PC-3 (cell line): ENCODE measurements at regions of chr1 and their contacts with region 1.

Region 1: GRCh38 chr1:204128964-204129896 is 22.6 kb downstream of the ETNK2 start:
- DNase-seq: peak; percentile 77
- ATAC-seq: peak; percentile 44
- H3K4me3 ChIP-seq: peak overlapping the region; percentile 46
- H3K27ac ChIP-seq: peak overlapping the region; percentile 55
- H3K4me1 ChIP-seq: peaks cover 57% of the 10 kb centered on the region
- H3K27me3 ChIP-seq: no peaks in the 10 kb centered on the region
- CTCF ChIP-seq: peak; percentile 88

Region 2: DNA sequence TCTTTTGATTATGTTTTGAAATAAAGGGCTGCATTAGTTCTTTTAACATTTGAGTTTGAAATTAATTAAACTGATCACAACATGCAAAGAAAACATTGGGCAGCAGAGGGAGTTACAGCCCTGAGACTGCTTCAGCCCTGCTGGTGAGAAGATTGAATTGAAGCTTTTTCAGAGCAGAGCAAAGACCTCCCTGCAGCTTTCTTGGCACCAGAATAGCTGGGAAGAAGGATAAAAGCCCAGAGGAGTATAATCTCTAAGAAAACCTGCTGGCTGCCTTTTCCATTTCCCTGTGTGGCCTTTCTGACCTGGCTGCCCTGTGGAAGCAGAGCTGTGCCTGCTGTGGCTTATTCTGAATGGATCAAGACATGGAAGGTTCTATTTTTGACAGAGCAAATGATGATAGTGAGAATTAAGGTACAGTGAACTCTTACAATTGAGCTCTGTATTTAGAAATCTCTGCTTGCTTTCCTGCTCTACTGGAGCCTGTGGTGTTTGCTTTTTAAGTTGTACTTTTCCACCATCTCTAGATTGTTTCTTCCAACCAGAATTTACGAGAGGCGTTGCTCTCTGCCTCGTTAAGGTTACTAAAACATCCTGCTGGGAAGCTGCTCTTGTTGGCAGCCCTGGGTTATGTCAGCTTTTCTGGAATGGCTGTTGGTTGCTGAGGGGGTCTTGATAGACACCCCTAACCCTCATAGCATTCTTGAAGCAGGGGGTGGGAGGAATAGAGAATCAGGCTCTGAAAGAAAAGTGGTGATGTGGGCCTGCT is 257.9 kb before region 1 on chr1:
- CTCF ChIA-PET with region 1: interaction called, 55 read pairs
- POLR2A ChIA-PET with region 1: interaction called, 3 read pairs
- intact Hi-C with region 1: loop called (anchors 1 kb)
- DNase-seq: peak; percentile 88
- ATAC-seq: peak; percentile 88
- H3K4me3 ChIP-seq: no peak overlapping the region
- H3K27ac ChIP-seq: no peak overlapping the region
- H3K4me1 ChIP-seq: peaks cover 13% of the 10 kb centered on the region
- H3K27me3 ChIP-seq: no peaks in the 10 kb centered on the region
- CTCF ChIP-seq: peak; percentile 99

Region 3: GRCh38 chr1:203906932-203907331 is 222.3 kb before region 1 on chr1:
- CTCF ChIA-PET with region 1: no interaction called
- POLR2A ChIA-PET with region 1: no interaction called
- intact Hi-C with region 1: loop called (anchors 1 kb)
- DNase-seq: peak; percentile 97
- ATAC-seq: peak; percentile 100
- H3K4me3 ChIP-seq: no peak overlapping the region
- H3K27ac ChIP-seq: peak overlapping the region; percentile 54
- H3K4me1 ChIP-seq: peaks cover 27% of the 10 kb centered on the region
- H3K27me3 ChIP-seq: no peaks in the 10 kb centered on the region
- CTCF ChIP-seq: no peak

Region 4: GRCh38 chr1:204080163-204080903 is 48.9 kb before region 1 on chr1:
- CTCF ChIA-PET with region 1: interaction called, 7 read pairs
- POLR2A ChIA-PET with region 1: no interaction called
- intact Hi-C with region 1: loop called (anchors 1 kb)
- DNase-seq: peak; percentile 96
- ATAC-seq: peak; percentile 87
- H3K4me3 ChIP-seq: peak overlapping the region; percentile 53
- H3K27ac ChIP-seq: peak overlapping the region; percentile 69
- H3K4me1 ChIP-seq: peaks cover 75% of the 10 kb centered on the region
- H3K27me3 ChIP-seq: no peaks in the 10 kb centered on the region
- CTCF ChIP-seq: no peak; the same call in 1 of the 2 replicates

Region 5: DNA sequence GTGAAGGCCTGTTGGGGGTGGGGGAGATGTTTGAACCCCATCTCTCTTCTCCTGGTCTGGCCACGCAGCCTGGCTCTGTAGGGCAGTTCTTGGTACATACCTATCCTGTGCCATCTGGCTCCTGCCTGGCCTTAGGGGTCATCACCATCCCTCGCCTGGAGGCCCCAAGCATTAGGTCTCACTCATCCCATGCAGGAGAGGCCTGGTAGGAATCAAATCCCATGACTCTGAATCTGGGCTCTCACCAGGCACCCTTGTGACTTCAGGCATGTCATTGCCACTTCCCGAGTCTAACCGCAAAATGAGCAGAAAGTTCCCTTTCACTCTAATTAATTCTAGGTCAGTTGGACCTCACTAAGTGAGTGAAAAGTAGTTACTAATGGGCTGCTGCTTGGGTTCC is 14.6 kb before region 1 on chr1:
- CTCF ChIA-PET with region 1: no interaction called
- POLR2A ChIA-PET with region 1: no interaction called
- intact Hi-C with region 1: no loop called
- DNase-seq: no peak
- ATAC-seq: no peak
- H3K4me3 ChIP-seq: no peak overlapping the region
- H3K27ac ChIP-seq: no peak overlapping the region
- H3K4me1 ChIP-seq: peaks cover 12% of the 10 kb centered on the region
- H3K27me3 ChIP-seq: no peaks in the 10 kb centered on the region
- CTCF ChIP-seq: no peak

Region 6: GRCh38 chr1:204171751-204172178 is 42.5 kb after region 1 on chr1:
- CTCF ChIA-PET with region 1: no interaction called
- POLR2A ChIA-PET with region 1: no interaction called
- intact Hi-C with region 1: loop called (anchors 1 kb)
- DNase-seq: peak; percentile 100
- ATAC-seq: peak; percentile 91
- H3K4me3 ChIP-seq: 0 out of 2 replicates have a peak overlapping the region, but pooled peaks have one; percentile 8
- H3K27ac ChIP-seq: peak overlapping the region; percentile 96
- H3K4me1 ChIP-seq: peaks cover 59% of the 10 kb centered on the region
- H3K27me3 ChIP-seq: no peaks in the 10 kb centered on the region
- CTCF ChIP-seq: no peak

Region 7: DNA sequence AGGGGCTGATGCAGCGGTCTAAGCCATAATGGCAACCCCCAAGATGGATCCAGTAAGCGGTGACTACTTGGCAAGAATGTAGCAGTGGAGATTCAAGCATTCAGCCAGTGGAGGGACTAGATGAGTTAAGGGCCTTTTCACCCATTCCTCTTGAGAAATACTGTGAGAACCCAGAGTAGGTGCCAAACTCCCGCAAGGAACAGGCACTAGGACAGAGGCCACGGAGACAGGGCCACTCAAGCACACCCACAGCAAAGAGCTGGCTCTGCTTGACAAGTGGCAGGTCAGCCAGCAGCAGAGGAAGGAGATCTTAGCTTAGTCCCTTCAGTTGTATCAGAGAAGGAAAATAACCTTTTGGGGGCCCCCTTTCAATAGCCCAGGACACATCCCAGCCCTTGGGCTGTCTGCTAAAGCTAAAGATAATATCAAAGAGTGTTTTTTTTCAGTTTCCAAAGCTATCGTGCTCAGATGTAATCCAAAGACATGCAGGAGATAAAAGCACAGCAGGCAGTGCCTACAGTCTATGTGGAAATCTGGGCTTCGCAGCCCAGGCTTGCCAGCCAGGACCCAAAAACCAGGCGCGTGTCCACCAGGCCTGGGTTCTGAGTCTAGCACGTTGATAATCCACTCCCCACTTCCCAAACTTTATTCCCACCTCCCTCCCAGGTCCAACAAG is 146.6 kb after region 1 on chr1:
- CTCF ChIA-PET with region 1: no interaction called
- POLR2A ChIA-PET with region 1: no interaction called
- intact Hi-C with region 1: no loop called
- DNase-seq: no peak
- ATAC-seq: no peak
- H3K4me3 ChIP-seq: no peak overlapping the region
- H3K27ac ChIP-seq: no peak overlapping the region
- H3K4me1 ChIP-seq: no peaks in the 10 kb centered on the region
- H3K27me3 ChIP-seq: no peaks in the 10 kb centered on the region
- CTCF ChIP-seq: no peak

Region 8: DNA sequence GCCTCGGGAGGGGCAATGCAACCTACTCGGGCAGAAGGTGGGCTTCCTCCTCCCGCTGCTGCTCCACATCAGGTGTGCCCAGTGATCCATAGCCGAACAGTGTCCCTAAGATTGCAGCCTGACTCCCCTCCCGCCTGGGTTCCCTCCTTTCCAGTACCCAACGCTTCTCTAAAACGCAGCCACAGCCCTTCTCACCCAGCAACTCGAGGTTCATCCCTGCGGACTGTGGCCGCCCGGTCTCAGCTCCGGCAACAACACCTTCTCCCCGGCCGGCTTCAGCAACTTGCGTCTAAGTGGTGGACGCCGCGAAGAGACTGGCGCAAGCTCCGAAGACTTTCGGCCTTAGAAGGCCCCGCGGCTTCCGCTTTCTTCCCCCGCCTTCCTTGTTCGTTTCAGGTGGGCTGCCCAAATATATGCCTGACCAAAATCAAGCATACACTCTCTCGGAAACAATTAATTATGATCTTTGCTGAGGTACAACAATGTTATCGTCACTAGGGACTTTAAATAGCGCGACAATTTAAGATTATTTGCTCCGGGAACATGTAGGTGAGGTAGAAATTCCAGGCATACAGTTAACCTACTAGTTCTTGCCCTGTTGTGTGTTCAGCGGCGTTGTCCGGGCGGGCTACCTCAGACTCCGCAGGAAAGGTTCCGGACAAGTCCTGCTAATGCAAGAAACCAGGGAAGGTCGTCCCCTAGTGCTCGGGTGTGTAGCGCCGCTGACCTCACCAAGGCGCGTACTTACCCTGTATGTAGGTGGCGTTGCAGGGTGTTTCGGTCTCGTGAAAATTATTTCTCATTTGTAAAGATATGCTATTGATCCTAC is 992.6 kb after region 1 on chr1 and contains the start of gene RBBP5:
- CTCF ChIA-PET with region 1: no interaction called
- POLR2A ChIA-PET with region 1: no interaction called
- intact Hi-C with region 1: no loop called
- DNase-seq: peak; percentile 99
- ATAC-seq: peak; percentile 98
- H3K4me3 ChIP-seq: peak within 1 kb of the TSS; percentile 73
- H3K27ac ChIP-seq: peak within 1 kb of the TSS; percentile 72
- H3K4me1 ChIP-seq: peaks cover 24% of the 10 kb centered on the region
- H3K27me3 ChIP-seq: no peaks in the 10 kb centered on the region
- CTCF ChIP-seq: peak; percentile 98
- total RNA-seq, gene RBBP5: 39.5 and 41.7 TPM in 2 replicates